ENCODE measurements at regions of chr16 and their contacts with region 1.

Region 1: GRCh38 chr16:9090960-9091866 is at the start of gene HAPSTR1:
- DNase-seq: peak; percentile 100
- ATAC-seq: peak; percentile 94
- H3K4me3 ChIP-seq: peak within 1 kb of the TSS; percentile 95 to 98 (median 98)
- H3K27ac ChIP-seq: peak within 1 kb of the TSS; percentile 85
- H3K4me1 ChIP-seq: peaks cover 64% of the 10 kb centered on the region
- H3K27me3 ChIP-seq: no peaks in the 10 kb centered on the region; a peak in 1 of 5 replicates
- CTCF ChIP-seq: no peak
- EP300 ChIP-seq: peak; percentile 39 to 41; a peak in 3 of 4 replicates
- POLR2A ChIP-seq: peak; percentile 97 to 99
- RAD21 ChIP-seq: peak; percentile 66
- total RNA-seq, gene HAPSTR1: 83.2 and 98.4 TPM in 2 replicates

Region 2: DNA sequence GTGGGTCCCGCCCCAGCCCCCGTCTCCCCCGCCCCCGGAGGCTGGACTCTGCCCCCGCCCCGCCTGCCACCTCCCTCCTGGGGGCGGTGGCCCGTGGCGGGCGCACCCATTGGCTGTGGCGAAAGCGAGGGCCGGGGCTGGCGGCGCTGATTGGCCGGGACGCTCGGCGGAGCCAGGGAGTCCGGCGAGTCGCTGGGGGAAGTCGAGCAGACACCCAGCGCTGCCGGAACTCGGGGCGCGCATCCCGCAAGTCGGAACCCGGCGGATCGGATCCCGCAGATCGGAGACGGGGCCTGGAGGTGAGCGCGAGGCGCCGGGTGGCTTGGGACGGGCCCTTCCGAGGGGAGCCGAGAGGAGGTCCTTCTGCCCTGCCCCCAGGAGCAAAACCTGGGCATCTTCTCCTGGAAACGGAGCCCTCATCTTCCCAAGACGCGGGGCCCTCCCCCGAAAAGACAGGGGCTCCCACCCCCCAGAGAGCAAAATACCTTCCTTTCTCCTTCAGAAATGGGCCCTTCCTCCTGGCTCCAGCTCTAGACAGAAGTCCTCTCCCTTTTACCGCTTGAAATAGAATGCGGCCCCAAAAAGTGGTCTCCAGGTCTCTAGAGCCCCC is 416.7 kb before region 1 on chr16 and contains the start of gene ABAT:
- CTCF ChIA-PET with region 1: no interaction called
- POLR2A ChIA-PET with region 1: interaction called, 12 read pairs
- in situ Hi-C with region 1: no loop called
- intact Hi-C with region 1: loop called (anchors 10 kb)
- DNase-seq: peak; percentile 91
- ATAC-seq: peak; percentile 93
- H3K4me3 ChIP-seq: peak within 1 kb of the TSS; percentile 81 to 94 (median 89)
- H3K27ac ChIP-seq: peak within 1 kb of the TSS; percentile 39
- H3K4me1 ChIP-seq: peaks cover 59% of the 10 kb centered on the region
- H3K27me3 ChIP-seq: no peaks in the 10 kb centered on the region; a peak in 1 of 5 replicates
- CTCF ChIP-seq: 0 out of 2 replicates have a peak, but pooled peaks have one; percentile 9
- EP300 ChIP-seq: peak; percentile 60 to 64; a peak in 2 of 4 replicates
- POLR2A ChIP-seq: peak; percentile 86 to 88
- RAD21 ChIP-seq: peak; percentile 58; the same call in 1 of the 2 replicates
- total RNA-seq, gene ABAT: 97.3 and 123 TPM in 2 replicates

Region 3: GRCh38 chr16:8885674-8886592 is 205.3 kb before region 1 on chr16:
- CTCF ChIA-PET with region 1: no interaction called
- POLR2A ChIA-PET with region 1: interaction called, 7 read pairs
- in situ Hi-C with region 1: no loop called
- intact Hi-C with region 1: loop called (anchors 5 kb)
- DNase-seq: peak; percentile 46
- ATAC-seq: peak; percentile 45
- H3K4me3 ChIP-seq: peak overlapping the region in 2 of 3 experiments; percentile 24 to 73; a peak in 3 of 6 replicates
- H3K27ac ChIP-seq: no peak overlapping the region
- H3K4me1 ChIP-seq: peaks cover 58% of the 10 kb centered on the region
- H3K27me3 ChIP-seq: no peaks in the 10 kb centered on the region
- CTCF ChIP-seq: peak; percentile 58
- EP300 ChIP-seq: no peak
- POLR2A ChIP-seq: peak in 1 of 2 experiments; percentile 33; a peak in 1 of 4 replicates
- RAD21 ChIP-seq: no peak; the same call in 1 of the 2 replicates

Region 4: GRCh38 chr16:8989099-8989878 is 101.9 kb before region 1 on chr16:
- CTCF ChIA-PET with region 1: no interaction called
- POLR2A ChIA-PET with region 1: interaction called, 29 read pairs
- in situ Hi-C with region 1: no loop called
- intact Hi-C with region 1: loop called (anchors 5 kb)
- DNase-seq: peak; percentile 88
- ATAC-seq: peak; percentile 37
- H3K4me3 ChIP-seq: peak overlapping the region in 2 of 3 experiments; percentile 8 to 45; a peak in 2 of 6 replicates
- H3K27ac ChIP-seq: peak overlapping the region; percentile 83
- H3K4me1 ChIP-seq: peaks cover 78% of the 10 kb centered on the region
- H3K27me3 ChIP-seq: no peaks in the 10 kb centered on the region
- CTCF ChIP-seq: no peak; the same call in 1 of the 2 replicates
- EP300 ChIP-seq: no peak; a peak in 1 of 4 replicates
- POLR2A ChIP-seq: no peak
- RAD21 ChIP-seq: peak; percentile 38; the same call in 1 of the 2 replicates

Region 5: DNA sequence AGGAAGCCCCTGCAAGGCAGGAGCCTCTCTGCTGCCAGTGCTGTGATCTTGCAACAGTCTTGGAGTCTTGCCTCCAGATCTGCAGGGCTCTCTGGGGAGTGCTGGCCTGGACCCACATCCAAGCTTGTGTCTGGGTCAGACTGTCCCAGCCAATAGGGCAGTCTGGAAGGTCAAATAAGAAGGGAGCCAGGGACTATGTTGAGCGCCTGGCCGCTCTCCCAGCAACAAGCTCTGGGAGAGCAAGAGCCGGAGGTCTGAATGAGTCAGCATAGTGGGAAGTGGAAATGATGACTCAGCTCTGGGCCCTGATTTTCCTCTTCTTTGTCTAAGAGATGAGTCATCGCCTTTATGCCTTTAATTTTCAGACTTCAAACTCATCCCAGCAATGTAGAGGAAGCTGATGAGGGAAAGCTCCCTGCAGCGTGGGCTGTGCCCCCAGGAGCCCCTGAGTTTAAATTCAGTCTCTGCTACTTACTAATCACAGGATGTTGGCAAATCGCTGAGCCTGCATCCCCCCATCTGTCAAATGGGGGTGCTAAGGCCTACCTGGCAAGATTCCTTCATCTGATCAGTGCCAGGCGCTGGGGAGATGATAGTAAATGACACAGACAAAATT is 43.4 kb before region 1 on chr16:
- CTCF ChIA-PET with region 1: no interaction called
- POLR2A ChIA-PET with region 1: interaction called, 28 read pairs
- in situ Hi-C with region 1: no loop called
- intact Hi-C with region 1: loop called (anchors 5 kb)
- DNase-seq: peak; percentile 97
- ATAC-seq: peak; percentile 92
- H3K4me3 ChIP-seq: no peak overlapping the region; a peak in 1 of 6 replicates
- H3K27ac ChIP-seq: peak overlapping the region; percentile 7
- H3K4me1 ChIP-seq: peaks cover 40% of the 10 kb centered on the region
- H3K27me3 ChIP-seq: no peaks in the 10 kb centered on the region
- CTCF ChIP-seq: no peak
- EP300 ChIP-seq: peak; percentile 68 to 69; a peak in 2 of 4 replicates
- POLR2A ChIP-seq: 0 out of 4 replicates have a peak, but pooled peaks of 1 of the 2 experiments have one; percentile 34
- RAD21 ChIP-seq: no peak

Region 6: DNA sequence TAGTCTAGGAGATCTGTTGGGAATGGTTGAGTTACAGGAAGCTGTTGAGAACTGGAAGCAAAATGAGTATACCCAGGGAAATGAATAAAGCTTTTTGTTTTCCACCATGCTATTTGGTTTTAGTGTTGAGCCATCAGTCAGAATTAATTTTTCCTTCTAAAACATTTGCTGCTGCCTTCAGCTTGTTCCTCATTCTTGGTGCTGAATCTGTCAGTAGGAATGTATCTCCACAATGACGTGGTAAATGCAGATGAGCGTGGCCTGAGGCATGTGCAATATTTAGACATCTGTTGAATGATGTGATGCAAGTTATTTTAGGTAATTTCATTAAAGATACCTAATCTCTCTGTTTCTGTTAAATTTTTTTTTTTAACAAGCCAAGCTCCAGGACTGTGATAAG is 11.2 kb after region 1 on chr16:
- CTCF ChIA-PET with region 1: no interaction called
- POLR2A ChIA-PET with region 1: interaction called, 52 read pairs
- in situ Hi-C with region 1: no loop called
- intact Hi-C with region 1: no loop called
- DNase-seq: no peak
- ATAC-seq: no peak
- H3K4me3 ChIP-seq: no peak overlapping the region
- H3K27ac ChIP-seq: no peak overlapping the region
- H3K4me1 ChIP-seq: peaks cover 34% of the 10 kb centered on the region
- H3K27me3 ChIP-seq: no peaks in the 10 kb centered on the region
- CTCF ChIP-seq: no peak
- EP300 ChIP-seq: no peak
- POLR2A ChIP-seq: peak in 1 of 2 experiments; percentile 32; a peak in 1 of 4 replicates
- RAD21 ChIP-seq: no peak

Region 7: DNA sequence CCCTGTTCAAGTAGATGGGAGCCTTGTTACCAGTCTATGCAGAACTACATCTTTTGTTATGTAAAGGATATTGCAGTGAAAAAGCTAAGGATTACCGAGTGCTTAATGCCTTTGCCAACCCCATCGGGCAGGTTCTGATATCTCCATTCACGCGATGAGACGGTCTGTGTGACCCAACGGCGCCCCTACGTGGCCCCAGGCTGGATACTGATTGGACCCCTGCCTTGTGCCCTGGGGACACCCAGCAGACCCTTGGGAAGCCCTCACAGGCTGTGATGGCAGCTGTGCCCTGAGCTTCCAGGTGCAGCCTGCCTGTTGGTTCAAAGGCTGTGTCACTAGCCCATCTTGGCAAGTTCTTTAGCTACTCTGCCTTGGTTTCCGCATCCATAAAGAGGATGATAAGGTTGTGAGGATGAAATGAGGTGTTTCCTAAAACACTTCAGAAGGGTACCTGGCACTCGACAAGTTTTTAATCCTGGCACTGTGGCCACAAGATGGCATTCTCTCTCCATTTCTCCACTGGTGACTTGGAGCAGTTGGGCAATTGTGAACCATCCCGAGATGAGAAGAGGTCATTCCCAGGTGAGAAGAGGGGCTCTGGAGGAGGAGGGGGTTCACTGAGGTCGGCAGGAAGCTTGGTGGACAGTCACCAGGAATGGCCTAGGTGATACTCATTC is 33.8 kb after region 1 on chr16:
- CTCF ChIA-PET with region 1: no interaction called
- POLR2A ChIA-PET with region 1: interaction called, 11 read pairs
- in situ Hi-C with region 1: no loop called
- intact Hi-C with region 1: no loop called
- DNase-seq: no peak
- ATAC-seq: no peak
- H3K4me3 ChIP-seq: no peak overlapping the region
- H3K27ac ChIP-seq: no peak overlapping the region
- H3K4me1 ChIP-seq: peaks cover 26% of the 10 kb centered on the region
- H3K27me3 ChIP-seq: no peaks in the 10 kb centered on the region
- CTCF ChIP-seq: no peak
- EP300 ChIP-seq: no peak
- POLR2A ChIP-seq: peak in 1 of 2 experiments; percentile 18; a peak in 1 of 4 replicates
- RAD21 ChIP-seq: no peak

Region 8: DNA sequence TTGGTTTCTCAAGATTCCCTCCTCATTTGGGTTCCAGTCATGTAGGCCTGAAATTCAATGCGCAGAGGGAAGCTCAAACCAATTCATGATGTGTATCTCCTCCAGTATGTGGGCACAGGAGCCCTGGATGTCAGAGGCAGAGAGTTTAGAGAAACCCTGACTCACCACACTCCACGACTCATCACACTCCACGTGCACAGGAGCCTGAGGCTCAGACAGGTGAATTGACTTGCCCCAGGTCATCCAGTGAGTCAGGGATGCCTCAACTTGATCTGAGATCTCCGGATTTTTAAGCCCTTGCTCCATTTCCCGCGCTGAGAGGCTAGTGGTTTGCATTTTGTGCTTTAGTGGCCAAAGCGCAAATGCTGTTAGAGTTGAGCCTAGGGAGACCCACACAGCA is 184.2 kb after region 1 on chr16:
- CTCF ChIA-PET with region 1: no interaction called
- POLR2A ChIA-PET with region 1: no interaction called
- in situ Hi-C with region 1: no loop called
- intact Hi-C with region 1: no loop called
- DNase-seq: no peak
- ATAC-seq: no peak
- H3K4me3 ChIP-seq: no peak overlapping the region
- H3K27ac ChIP-seq: no peak overlapping the region
- H3K4me1 ChIP-seq: no peaks in the 10 kb centered on the region
- H3K27me3 ChIP-seq: peaks cover 0 to 9% of the 10 kb centered on the region in 2 experiments; a peak in 1 of 5 replicates
- CTCF ChIP-seq: no peak
- EP300 ChIP-seq: no peak
- POLR2A ChIP-seq: no peak
- RAD21 ChIP-seq: no peak

Measured in HepG2 (cell line).